ENCODE measurements at regions of chr10 and their contacts with region 1.

Region 1: GRCh38 chr10:102352066-102352715 is 43.3 kb upstream of the NFKB2 start:
- DNase-seq: no peak
- H3K4me3 ChIP-seq: no peak overlapping the region
- H3K27me3 ChIP-seq: no peaks in the 10 kb centered on the region
- CTCF ChIP-seq: peak; percentile 90

Region 2: GRCh38 chr10:102167861-102168260 is 184.3 kb before region 1 on chr10:
- CTCF ChIA-PET with region 1: interaction called, 15 read pairs
- POLR2A ChIA-PET with region 1: no interaction called
- DNase-seq: no peak
- H3K4me3 ChIP-seq: no peak overlapping the region
- H3K27me3 ChIP-seq: no peaks in the 10 kb centered on the region
- CTCF ChIP-seq: no peak

Region 3: GRCh38 chr10:102322914-102323313 is 29.3 kb before region 1 on chr10:
- CTCF ChIA-PET with region 1: interaction called, 11 read pairs
- POLR2A ChIA-PET with region 1: no interaction called
- DNase-seq: no peak
- H3K4me3 ChIP-seq: no peak overlapping the region
- H3K27me3 ChIP-seq: no peaks in the 10 kb centered on the region
- CTCF ChIP-seq: no peak

Region 4: DNA sequence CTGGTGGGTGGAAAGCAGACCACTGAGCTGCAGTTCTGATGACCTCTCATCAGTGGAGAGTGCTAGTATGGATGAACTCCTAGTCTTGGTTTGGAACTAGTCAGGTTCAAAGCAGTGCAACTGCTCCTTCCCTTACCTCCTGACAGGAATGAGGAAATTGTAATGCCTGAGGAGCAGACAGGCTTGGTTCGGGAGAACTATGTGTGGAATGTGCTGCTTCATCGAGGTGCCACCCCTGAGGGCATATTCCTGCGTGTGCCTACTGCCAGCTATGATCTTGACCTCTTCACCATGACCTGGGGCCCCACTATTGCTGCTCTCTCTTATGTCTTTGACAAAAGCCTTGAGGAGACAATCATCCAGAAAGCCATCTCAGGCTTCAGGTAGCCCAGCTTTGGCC is 15.9 kb after region 1 on chr10:
- CTCF ChIA-PET with region 1: interaction called, 27 read pairs
- POLR2A ChIA-PET with region 1: no interaction called
- DNase-seq: no peak
- H3K4me3 ChIP-seq: no peak overlapping the region
- H3K27me3 ChIP-seq: no peaks in the 10 kb centered on the region
- CTCF ChIP-seq: no peak

Region 5: DNA sequence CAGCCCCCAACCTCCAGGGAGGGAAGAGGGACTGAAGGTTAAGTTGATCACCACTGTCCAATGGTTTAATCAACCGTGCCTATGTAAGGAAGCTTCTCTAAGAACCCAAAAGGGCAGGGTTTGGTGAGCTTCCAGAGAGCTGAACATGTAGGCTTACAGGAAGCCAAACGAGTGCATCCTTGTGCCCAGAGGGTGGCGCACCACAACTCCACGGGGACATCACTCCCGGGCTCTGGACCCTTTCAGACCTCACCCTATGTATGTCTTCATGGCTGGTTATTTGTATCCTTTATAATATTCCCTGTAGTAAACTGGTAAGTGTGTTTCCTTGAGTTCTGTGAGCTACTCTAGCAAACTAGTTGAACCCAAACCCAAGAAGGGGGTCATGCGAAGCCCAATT is 31.9 kb after region 1 on chr10:
- CTCF ChIA-PET with region 1: interaction called, 18 read pairs
- POLR2A ChIA-PET with region 1: no interaction called
- DNase-seq: no peak
- H3K4me3 ChIP-seq: no peak overlapping the region
- H3K27me3 ChIP-seq: no peaks in the 10 kb centered on the region
- CTCF ChIP-seq: peak; percentile 30; the same call in 1 of the 2 replicates

Region 6: DNA sequence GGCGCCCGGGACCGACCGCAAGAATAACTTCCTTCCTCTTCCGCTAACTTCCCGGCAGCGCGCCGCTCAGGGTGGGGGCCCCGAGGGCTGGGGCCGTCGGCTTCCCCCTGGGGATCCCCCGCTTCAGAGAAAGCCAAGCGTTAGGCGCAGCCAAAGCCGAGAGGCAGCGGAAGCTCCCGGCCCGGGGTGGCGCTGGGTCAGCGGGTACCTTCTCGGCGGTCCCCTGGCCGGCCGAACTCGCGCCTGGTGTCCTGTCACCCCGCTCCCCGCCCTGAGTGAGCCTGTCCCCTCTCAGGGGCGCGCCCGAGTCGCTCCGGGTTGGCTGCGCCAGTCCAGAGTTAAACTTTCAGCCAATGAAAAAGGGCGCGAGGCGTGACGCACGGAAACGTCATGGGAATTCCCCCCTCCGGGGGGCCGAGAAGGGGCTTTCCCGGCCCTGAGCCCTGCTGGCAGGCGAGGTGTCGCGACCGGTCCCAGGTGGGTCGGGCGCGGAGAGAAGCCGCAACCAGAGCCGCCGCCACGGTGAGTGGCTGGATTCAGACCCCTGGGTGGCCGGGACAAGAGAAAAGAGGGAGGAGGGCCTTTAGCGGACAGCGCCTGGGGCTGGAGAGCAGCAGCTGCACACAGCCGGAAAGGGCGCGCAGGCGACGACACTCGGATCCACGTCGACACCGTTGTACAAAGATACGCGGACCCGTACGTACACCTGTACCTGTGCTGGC is 42.0 kb after region 1 on chr10:
- CTCF ChIA-PET with region 1: interaction called, 11 read pairs
- POLR2A ChIA-PET with region 1: no interaction called
- DNase-seq: peak; percentile 51
- H3K4me3 ChIP-seq: peak overlapping the region; percentile 79
- H3K27me3 ChIP-seq: no peaks in the 10 kb centered on the region
- CTCF ChIP-seq: no peak; the same call in 1 of the 2 replicates

Region 7: DNA sequence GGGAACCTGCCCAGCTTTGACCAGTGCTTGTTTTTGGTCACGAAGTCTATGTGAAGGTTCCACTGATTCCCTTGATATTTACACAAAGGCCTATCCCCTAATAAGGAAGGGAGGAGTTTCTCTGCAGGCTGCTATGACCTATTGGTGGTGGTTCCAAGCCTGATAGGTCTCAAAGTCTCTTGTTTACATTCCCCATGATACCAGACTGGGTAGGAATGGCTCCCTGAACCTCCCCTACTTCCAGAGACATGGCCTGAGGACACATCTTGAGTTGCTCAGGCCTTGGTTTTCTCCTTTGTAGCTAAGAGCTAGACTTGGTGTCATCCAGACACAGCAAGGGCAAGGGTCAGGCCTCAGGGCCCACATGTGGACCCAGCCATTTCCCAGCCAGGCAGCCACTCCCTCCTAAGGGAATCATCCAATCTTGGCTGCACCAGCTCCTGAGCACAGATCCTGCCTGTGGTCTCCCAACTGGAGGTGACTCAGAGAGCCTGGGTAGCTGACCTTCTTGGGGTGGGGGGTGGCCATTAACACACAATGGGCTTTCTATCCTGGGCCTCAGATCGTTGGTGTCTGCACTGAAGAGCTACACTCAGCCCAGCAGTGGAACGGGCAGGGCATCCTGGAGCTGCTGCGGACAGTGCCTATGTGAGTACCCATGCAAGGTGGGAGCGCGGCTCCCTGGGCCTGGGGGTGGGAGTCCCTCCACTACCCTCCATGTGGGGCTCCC is 241.0 kb after region 1 on chr10:
- CTCF ChIA-PET with region 1: no interaction called
- POLR2A ChIA-PET with region 1: no interaction called
- DNase-seq: peak; percentile 54
- H3K4me3 ChIP-seq: no peak overlapping the region
- H3K27me3 ChIP-seq: no peaks in the 10 kb centered on the region
- CTCF ChIP-seq: no peak